BJ (cell line): ENCODE measurements at regions of chr2 and their contacts with region 1.

Region 1: DNA sequence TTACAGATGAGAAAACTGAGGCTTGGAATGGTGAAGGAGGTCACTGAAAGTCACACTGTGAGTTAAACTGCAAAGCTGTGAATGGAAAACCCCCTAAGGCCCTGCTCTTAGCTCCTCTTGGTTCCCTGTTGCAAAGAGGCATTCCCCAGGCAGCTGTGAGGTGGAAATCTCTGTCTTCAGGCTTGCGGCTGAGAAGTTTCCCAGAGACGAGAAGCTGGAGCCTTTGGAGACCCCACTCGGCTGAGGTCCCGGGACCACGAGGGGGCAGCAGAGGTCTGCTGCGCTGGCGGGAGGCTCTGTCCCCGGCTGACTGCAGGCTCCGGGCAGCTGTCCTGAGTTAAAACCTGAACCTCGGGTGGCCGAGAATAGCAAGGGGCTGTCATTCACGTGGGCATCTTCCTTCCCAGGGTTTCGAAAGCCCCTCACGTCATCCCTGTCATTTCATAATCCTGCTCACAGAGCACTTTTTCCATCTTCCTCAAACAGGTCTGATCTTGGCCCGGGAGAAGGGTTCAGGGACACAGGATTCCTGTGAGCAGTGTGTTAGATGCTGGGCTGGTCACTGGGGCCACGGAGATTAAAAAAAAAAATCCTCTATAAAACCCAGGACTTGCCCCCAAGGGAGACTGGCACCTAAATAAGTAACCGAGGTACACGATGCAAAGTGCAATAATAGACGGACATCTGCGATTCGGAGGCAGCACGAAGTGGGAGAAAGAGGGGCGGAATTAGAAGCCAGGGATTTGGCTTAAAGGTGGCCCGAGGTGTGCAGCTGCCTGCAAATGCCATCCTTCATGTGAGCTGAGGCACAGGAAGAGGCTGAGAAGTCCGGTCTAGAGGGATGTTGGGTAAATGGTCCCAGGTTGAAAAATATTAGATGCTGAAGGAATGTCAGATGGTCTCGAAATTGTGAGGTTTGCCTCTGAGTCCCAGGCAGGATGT is 24.6 kb upstream of the ATOH8 start:
- DNase-seq: no peak
- H3K4me3 ChIP-seq: no peak overlapping the region
- H3K27me3 ChIP-seq: no peaks in the 10 kb centered on the region
- CTCF ChIP-seq: peak; percentile 99

Region 2: GRCh38 chr2:85635636-85636035 is 93.5 kb before region 1 on chr2:
- CTCF ChIA-PET with region 1: interaction called, 27 read pairs
- POLR2A ChIA-PET with region 1: no interaction called
- DNase-seq: no peak
- H3K4me3 ChIP-seq: no peak overlapping the region
- H3K27me3 ChIP-seq: no peaks in the 10 kb centered on the region
- CTCF ChIP-seq: no peak

Region 3: DNA sequence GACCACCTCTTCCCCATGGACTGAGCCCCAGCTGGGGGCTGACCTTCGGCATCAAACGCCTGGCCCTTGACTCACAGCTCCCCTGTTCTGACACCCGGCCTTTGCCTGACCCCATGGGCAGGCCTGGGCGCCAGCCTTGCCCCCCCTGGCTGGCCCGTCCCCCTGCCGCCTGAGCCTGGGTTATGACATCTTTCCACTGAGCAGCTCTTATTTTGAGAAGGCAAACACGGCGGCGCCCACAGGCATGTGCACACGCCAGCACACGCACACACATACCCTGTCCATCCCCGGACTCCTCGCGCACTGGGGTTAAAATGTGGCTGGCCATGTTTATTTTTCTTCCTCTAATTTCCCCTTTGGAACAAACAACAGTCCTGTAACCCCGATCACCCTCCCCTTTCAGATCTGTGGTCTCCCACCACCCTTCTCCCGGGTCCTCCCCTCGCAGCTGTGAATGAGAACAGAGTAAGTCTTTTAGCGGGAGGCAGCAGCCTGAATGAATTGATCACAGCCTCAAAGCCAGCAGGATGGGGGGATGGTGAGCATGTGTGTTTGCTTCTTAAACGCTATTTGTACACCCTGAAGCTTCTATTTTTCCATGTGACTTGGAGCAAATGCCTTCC is 12.8 kb after region 1 on chr2:
- CTCF ChIA-PET with region 1: interaction called, 32 read pairs
- POLR2A ChIA-PET with region 1: interaction called, 3 read pairs
- DNase-seq: no peak
- H3K4me3 ChIP-seq: no peak overlapping the region; the same call in 1 of the 2 replicates
- H3K27me3 ChIP-seq: no peaks in the 10 kb centered on the region
- CTCF ChIP-seq: peak; percentile 13; the same call in 1 of the 2 replicates

Region 4: DNA sequence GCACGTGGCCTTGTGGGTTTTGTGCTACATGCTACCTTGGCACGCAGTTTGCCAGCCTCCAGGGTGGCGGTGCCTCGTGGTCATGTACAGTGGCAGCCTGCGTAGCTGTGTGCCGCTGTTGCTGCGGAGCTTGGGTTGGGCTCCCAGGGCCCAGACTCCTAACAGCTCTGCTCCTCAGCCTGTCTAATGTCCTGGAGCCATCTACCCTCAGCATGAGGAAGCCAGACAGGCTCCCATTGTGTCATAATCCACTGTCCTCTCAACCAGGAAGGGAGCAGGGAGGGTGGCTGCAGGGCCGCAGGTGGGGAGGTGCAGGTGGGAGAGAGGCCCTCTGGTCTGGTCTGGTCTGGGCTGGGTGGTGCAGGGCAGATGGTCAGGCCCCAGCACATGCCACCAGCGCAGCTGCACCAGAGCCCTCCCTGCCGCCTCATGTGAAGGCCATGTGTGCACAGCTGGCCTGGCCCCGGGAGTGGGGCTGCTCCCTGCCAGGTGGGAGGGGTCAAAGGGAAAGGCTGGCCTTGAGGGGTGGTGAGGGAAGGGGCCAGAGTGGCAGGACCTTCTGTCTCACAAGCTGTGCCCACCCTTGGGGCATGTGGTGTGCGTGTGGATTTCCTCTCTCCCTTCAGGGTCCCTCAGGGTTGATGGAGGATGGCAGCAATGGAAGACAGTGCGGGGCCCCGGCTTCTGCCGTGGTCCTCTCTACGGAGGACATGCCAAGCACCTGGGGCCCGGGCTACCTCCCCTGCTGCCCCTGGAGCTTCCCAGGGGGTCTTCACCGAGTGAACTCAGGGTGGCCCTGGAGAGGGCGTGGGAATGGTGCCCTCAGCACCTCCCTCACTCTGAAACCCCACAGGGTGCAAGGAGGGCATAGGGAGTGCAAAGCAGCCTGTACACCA is 29.5 kb after region 1 on chr2:
- CTCF ChIA-PET with region 1: interaction called, 14 read pairs
- POLR2A ChIA-PET with region 1: no interaction called
- DNase-seq: no peak
- H3K4me3 ChIP-seq: no peak overlapping the region
- H3K27me3 ChIP-seq: no peaks in the 10 kb centered on the region
- CTCF ChIP-seq: no peak

Region 5: GRCh38 chr2:85797921-85798320 is 68.8 kb after region 1 on chr2:
- CTCF ChIA-PET with region 1: interaction called, 23 read pairs
- POLR2A ChIA-PET with region 1: no interaction called
- DNase-seq: no peak
- H3K4me3 ChIP-seq: no peak overlapping the region
- H3K27me3 ChIP-seq: no peaks in the 10 kb centered on the region
- CTCF ChIP-seq: peak; percentile 62

Region 6: DNA sequence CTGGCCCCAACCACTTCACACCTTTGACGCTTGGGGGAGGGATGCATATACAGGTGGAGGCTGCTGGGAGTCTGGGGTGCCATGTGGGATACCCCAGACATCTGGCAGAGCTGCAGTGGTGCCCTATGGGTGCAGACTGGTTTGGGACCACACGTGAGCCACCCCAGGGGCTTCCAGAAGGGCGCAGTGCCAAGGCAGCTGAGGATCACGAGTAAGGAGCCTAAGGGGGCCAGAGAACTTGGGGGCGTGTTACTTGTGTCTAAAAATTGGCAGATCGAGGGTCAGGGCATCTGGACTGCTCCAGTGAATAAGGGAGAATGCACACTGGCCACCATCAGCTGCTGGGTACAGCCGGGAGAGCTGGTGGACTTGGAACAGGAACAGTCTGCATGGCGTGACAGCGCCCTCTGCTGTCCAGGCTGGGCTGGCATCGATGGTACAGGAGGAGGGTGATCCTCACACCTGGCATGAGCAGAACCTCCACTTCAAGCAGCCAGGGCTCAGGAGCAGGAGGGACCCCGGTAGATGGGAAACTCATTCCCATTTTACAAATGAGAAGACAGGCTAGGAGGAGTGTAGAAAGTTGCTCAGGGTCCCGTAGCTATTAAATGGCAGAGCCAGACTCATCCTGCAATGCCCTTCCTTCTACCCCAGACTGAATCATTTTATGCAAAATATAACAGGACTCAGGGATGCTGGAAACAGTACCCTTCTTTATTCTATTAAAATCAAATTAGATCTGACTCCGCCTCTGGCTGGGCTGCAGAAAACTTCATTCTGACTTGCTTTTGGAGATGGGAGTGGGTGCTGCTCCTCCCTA is 85.0 kb after region 1 on chr2:
- CTCF ChIA-PET with region 1: interaction called, 194 read pairs
- POLR2A ChIA-PET with region 1: interaction called, 3 read pairs
- DNase-seq: no peak
- H3K4me3 ChIP-seq: no peak overlapping the region
- H3K27me3 ChIP-seq: no peaks in the 10 kb centered on the region
- CTCF ChIP-seq: peak; percentile 96